Breast epithelium (tissue), 4 donors: ENCODE measurements at regions of chr22 and their contacts with region 1.

Region 1: GRCh38 chr22:31055635-31056159 is 25.4 kb upstream of the SMTN start:
- DNase-seq: peak; percentile 89 to 94
- H3K4me3 ChIP-seq: no peak overlapping the region
- H3K27ac ChIP-seq: peak overlapping the region; percentile 88 to 89
- H3K4me1 ChIP-seq: no peaks in the 10 kb centered on the region
- H3K27me3 ChIP-seq: no peaks in the 10 kb centered on the region
- CTCF ChIP-seq: no peak
- POLR2A ChIP-seq: no peak

Region 2: GRCh38 chr22:29610780-29611179 is 1444.9 kb before region 1 on chr22:
- intact Hi-C with region 1: loop called (anchors 5 kb)
- DNase-seq: no peak
- H3K4me3 ChIP-seq: no peak overlapping the region
- H3K27ac ChIP-seq: no peak overlapping the region
- H3K4me1 ChIP-seq: no peaks in the 10 kb centered on the region
- H3K27me3 ChIP-seq: no peaks in the 10 kb centered on the region
- CTCF ChIP-seq: no peak
- POLR2A ChIP-seq: no peak

Region 3: GRCh38 chr22:29733362-29734201 is 1322.1 kb before region 1 on chr22:
- intact Hi-C with region 1: loop called (anchors 10 kb)
- DNase-seq: peak in 1 of 2 donors; percentile 50
- H3K4me3 ChIP-seq: no peak overlapping the region
- H3K27ac ChIP-seq: no peak overlapping the region
- H3K4me1 ChIP-seq: no peaks in the 10 kb centered on the region
- H3K27me3 ChIP-seq: no peaks in the 10 kb centered on the region
- CTCF ChIP-seq: no peak
- POLR2A ChIP-seq: no peak

Region 4: GRCh38 chr22:30183861-30184278 is 871.8 kb before region 1 on chr22:
- intact Hi-C with region 1: no loop called
- DNase-seq: no peak
- H3K4me3 ChIP-seq: no peak overlapping the region
- H3K27ac ChIP-seq: no peak overlapping the region
- H3K4me1 ChIP-seq: no peaks in the 10 kb centered on the region
- H3K27me3 ChIP-seq: no peaks in the 10 kb centered on the region
- CTCF ChIP-seq: no peak
- POLR2A ChIP-seq: no peak

Region 5: DNA sequence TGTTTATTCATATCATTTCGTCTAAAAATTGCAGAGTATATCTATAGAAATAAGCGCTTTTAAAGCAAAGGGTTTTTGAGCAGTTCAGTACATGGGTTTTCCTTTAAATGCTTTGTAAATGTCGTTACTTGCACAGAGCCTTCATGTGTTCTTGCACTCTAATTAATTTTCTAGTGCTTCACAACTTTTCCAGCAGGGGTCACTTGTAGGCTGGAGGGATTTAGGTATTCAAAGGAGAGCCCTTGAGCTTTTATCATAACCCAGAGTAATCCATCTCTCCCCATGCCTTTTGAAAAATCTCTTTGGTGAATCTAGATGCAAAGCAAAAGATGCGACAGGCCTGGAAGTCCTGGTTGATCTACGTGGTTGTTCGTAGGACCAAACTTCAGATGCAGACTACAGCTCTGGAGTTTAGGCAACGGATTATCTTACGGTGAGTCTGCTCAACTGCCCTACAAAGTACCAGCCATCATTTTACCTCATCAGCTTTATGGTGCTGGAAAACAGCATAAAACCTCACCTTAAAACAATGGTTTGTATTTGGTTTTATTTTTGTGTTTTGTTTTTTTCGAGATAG is 501.0 kb after region 1 on chr22:
- intact Hi-C with region 1: no loop called
- DNase-seq: no peak
- H3K4me3 ChIP-seq: no peak overlapping the region
- H3K27ac ChIP-seq: no peak overlapping the region
- H3K4me1 ChIP-seq: no peaks in the 10 kb centered on the region
- H3K27me3 ChIP-seq: no peaks in the 10 kb centered on the region
- CTCF ChIP-seq: peak in 2 of 3 donors; percentile 43 to 56
- POLR2A ChIP-seq: no peak